ENCODE measurements at regions of chr16 and their contacts with region 1.

Region 1: DNA sequence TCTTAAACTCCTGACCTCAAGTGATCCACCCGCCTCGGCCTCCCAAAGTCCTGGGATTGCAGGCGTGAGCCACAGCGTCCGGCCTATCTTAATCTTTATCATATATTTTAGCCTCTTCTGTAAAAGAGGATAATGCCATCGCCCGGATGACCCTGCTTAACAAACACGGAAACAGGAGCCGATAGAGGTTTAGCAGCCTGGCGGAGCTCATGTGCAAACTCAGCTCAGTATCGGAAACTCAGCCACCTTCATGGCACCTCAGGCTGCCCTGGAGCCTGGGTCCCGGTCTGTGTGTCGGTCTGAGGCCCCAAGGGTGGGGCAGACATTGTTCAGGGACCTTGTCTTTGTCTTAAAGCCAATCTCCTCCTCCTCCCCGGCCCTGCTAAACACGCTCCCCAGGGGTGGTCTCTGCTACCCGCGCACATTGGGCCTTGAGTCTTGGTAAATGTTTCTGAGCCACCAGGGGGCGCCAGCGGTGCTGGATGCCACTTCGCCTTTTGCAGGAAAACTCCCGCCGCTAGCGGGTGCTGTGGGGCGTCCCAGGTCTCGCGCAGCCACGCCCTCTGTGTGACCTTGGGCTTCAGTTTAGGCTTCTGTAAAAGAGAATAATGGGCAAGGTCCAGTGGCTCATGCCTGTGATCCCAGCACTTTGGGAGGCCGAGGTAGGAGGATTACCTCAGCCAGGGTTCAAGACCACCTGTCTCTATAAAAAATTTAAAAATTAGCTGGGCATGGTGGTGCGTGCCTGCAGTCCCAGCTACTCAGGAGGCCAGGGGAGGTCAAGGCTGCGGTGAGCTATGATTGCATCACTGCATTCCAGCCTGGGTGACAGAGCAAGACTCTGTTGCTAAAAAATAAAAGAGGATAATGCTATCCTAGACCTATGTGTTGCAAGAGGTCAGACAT is 2.7 kb downstream of the CETP start:
- DNase-seq: peak; percentile 85 to 94 (median 86)
- ATAC-seq: peak; percentile 90
- H3K4me3 ChIP-seq: no peak overlapping the region
- H3K27ac ChIP-seq: peak overlapping the region; percentile 53; the same call in 1 of the 3 replicates
- H3K4me1 ChIP-seq: peaks cover 4 to 22% of the 10 kb centered on the region in 2 experiments; a peak in 4 of 5 replicates
- H3K27me3 ChIP-seq: peaks cover under 1 to 6% of the 10 kb centered on the region in 2 experiments; a peak in 4 of 5 replicates
- CTCF ChIP-seq: peak; percentile 99 to 100 (median 99)
- EP300 ChIP-seq: no peak
- POLR2A ChIP-seq: no peak
- RAD21 ChIP-seq: peak; percentile 68 to 91

Region 2: DNA sequence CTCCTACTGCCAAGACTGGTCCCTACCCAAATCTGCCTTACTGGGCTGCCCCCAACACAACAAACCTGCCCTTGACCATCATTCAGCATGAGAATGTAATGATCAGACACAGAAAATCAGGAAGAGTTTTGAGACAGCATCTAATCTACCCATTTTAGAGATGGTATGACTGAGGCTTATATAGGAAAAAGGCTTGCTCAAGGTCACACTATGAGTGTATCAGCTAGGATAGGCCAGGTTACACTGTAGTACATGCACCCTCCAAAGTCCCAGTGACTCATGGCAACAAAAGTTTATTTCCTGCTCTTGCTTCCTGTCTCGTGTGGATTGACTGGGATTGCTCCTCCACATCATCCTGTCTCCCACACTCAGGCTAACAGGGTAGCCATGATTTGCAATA is 52.8 kb after region 1 on chr16:
- CTCF ChIA-PET with region 1: no interaction called
- POLR2A ChIA-PET with region 1: no interaction called
- in situ Hi-C with region 1: no loop called
- intact Hi-C with region 1: loop called (anchors 5 kb)
- DNase-seq: no peak
- ATAC-seq: no peak
- H3K4me3 ChIP-seq: no peak overlapping the region
- H3K27ac ChIP-seq: no peak overlapping the region
- H3K4me1 ChIP-seq: no peaks in the 10 kb centered on the region
- H3K27me3 ChIP-seq: peaks cover 26 to 42% of the 10 kb centered on the region in 2 experiments
- CTCF ChIP-seq: no peak
- EP300 ChIP-seq: no peak
- POLR2A ChIP-seq: no peak
- RAD21 ChIP-seq: no peak

Region 3: GRCh38 chr16:57045694-57046381 is 81.3 kb after region 1 on chr16:
- CTCF ChIA-PET with region 1: interaction called, 6 read pairs
- POLR2A ChIA-PET with region 1: no interaction called
- in situ Hi-C with region 1: no loop called
- intact Hi-C with region 1: loop called (anchors 1 kb)
- DNase-seq: peak; percentile 59 to 76 (median 63)
- ATAC-seq: peak; percentile 94
- H3K4me3 ChIP-seq: no peak overlapping the region
- H3K27ac ChIP-seq: no peak overlapping the region
- H3K4me1 ChIP-seq: no peaks in the 10 kb centered on the region; a peak in 1 of 5 replicates
- H3K27me3 ChIP-seq: peaks cover 3 to 40% of the 10 kb centered on the region in 2 experiments; a peak in 2 of 5 replicates
- CTCF ChIP-seq: peak; percentile 76 to 85 (median 82)
- EP300 ChIP-seq: no peak
- POLR2A ChIP-seq: no peak
- RAD21 ChIP-seq: peak; percentile 37 to 73; a peak in 3 of 4 replicates

Region 4: GRCh38 chr16:57167953-57168352 is 203.5 kb after region 1 on chr16:
- CTCF ChIA-PET with region 1: interaction called, 5 read pairs
- POLR2A ChIA-PET with region 1: no interaction called
- in situ Hi-C with region 1: no loop called
- intact Hi-C with region 1: loop called (anchors 1 kb)
- DNase-seq: peak in 2 of 4 experiments; percentile 49 to 67
- ATAC-seq: peak; percentile 88
- H3K4me3 ChIP-seq: no peak overlapping the region
- H3K27ac ChIP-seq: no peak overlapping the region
- H3K4me1 ChIP-seq: no peaks in the 10 kb centered on the region
- H3K27me3 ChIP-seq: no peaks in the 10 kb centered on the region
- CTCF ChIP-seq: peak; percentile 55 to 79 (median 65)
- EP300 ChIP-seq: no peak
- POLR2A ChIP-seq: no peak
- RAD21 ChIP-seq: peak; percentile 70 to 81